ENCODE measurements at regions of chr6 and their contacts with region 1.

Region 1: DNA sequence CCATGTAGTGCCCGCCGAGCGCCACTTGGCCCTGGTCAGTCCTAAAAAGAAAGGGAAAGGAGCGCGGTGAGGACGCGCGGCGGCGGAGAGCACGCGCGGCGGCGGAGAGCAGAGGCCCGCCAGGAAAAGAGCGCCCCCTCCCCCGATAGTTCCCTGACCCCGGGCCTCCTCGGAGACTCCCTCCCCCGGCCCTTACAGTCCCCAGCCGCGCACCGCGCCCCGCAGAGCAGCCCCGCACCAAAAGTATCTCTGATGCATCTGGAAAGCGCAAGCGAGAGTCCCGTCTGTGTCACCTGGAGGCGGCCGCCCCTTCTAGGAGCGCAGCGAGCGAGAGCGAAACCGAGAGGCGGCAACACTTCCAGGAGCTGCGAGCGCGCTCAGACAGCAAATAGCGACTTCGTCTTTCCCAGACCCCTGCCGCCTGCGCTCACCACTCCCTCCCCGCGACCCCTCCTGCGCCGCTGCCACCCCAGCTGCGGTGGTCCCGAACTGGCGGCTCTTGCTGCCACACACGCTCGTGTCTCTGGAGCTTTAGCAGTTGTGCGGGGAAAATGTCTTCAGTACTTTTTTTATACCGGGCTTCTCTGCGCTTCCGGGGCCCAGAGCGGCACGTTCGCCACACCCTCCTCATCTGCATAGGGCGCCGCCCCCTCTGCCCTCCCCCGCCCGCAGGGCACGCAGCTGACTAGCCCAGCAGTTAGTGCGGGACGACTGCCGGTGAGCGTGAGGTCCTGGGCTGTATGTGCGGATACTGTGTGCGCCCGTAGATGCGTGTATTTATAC is at the start of gene TENT5A:
- DNase-seq: peak; percentile 90
- ATAC-seq: peak; percentile 81
- H3K4me3 Mint-ChIP-seq: peak within 1 kb of the TSS; percentile 77
- H3K27ac Mint-ChIP-seq: peak within 1 kb of the TSS; percentile 71
- H3K4me1 Mint-ChIP-seq: peaks cover 21% of the 10 kb centered on the region
- H3K27me3 Mint-ChIP-seq: peaks cover 14% of the 10 kb centered on the region
- total RNA-seq, gene TENT5A: 0.43 to 0.51 TPM

Region 2: DNA sequence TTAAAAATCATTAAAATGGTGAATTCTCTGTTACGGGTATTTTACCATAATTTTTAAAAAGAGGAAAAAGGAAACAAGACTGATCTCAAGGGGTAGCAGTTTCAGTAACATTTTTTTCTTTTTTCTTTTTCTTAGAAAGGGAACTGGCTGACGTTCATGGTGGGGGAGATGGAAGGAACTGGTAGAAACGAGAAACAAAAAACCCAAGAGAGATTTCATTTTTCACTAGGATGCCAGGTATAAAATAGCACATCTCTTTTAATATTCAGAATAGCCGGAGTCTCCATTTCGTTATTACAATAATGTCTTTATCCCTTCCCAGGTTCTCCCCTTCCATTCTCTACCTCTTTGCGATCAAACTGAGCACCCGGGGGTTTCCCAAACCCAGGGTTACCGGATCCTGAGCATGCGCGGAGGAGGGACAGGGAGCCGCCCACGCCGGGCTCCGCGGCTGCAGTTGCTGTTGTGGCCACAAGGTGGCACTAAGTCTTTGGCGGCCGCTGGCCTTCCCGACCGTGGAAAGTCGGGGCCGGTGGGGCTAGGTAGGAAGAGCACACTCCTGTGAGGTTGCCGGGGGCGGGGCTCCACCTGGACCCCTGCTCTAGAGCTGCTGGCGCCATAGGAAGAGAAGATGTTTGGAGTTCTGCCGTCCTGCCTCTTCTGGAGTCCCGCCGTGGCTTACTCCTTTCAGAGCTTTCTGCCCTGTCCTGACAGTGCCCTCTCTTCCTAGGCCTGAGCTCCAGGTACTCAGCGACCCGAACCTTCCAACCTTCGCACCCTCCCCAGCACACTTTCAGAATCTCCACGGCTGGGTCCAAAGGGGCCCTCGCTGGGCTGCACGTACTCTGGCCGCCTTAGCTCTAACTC is 1974.4 kb before region 1 on chr6:
- CTCF ChIA-PET with region 1: no interaction called
- POLR2A ChIA-PET with region 1: no interaction called
- intact Hi-C with region 1: loop called (anchors 5 kb)
- DNase-seq: peak; percentile 93
- ATAC-seq: peak; percentile 88
- H3K4me3 Mint-ChIP-seq: peak overlapping the region; percentile 63
- H3K27ac Mint-ChIP-seq: peak overlapping the region; percentile 62
- H3K4me1 Mint-ChIP-seq: peaks cover 7% of the 10 kb centered on the region
- H3K27me3 Mint-ChIP-seq: peaks cover 4% of the 10 kb centered on the region

Region 3: GRCh38 chr6:80106418-80107235 is 1645.7 kb before region 1 on chr6 and contains the start of gene BCKDHB:
- CTCF ChIA-PET with region 1: interaction called, 3 read pairs
- POLR2A ChIA-PET with region 1: no interaction called
- intact Hi-C with region 1: loop called (anchors 1 to 2 kb)
- DNase-seq: peak; percentile 98
- ATAC-seq: peak; percentile 98
- H3K4me3 Mint-ChIP-seq: peak within 1 kb of the TSS; percentile 90
- H3K27ac Mint-ChIP-seq: peak within 1 kb of the TSS; percentile 88
- H3K4me1 Mint-ChIP-seq: peaks cover 12% of the 10 kb centered on the region
- H3K27me3 Mint-ChIP-seq: peaks cover 6% of the 10 kb centered on the region
- total RNA-seq, gene BCKDHB: 13.1 to 21.4 TPM

Region 4: DNA sequence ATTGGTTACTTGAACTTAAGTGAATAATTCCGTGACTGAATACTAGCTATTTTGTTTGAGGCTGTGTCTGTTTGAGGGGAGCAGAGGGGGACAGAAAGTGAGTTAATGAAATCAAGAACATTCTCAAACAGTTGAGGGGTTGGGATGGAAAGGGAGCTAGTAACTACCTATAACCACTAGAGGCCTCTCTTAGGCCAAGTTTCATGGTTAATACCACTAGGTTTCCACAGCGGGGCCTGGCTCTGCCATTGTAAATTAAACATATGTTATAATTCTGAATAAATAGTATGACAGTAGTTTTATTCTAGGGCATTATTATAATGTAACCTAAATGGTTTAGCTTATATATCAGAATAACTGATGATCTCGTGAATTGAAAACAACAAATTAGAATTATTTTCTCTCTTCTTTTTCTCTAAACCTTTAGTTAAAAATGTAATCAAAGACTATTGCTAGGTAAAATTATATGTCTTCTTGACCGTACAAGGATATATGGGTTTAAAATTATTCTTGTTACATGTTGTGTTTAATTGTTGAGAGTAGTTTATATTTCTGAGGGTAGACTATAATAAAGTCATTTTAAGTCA is 1537.8 kb before region 1 on chr6:
- CTCF ChIA-PET with region 1: interaction called, 4 read pairs
- POLR2A ChIA-PET with region 1: no interaction called
- intact Hi-C with region 1: loop called in 1 of 2 experiments (anchors 2 kb)
- DNase-seq: peak; percentile 22
- ATAC-seq: peak; percentile 76
- H3K4me3 Mint-ChIP-seq: no peak overlapping the region
- H3K27ac Mint-ChIP-seq: no peak overlapping the region
- H3K4me1 Mint-ChIP-seq: peaks cover 5% of the 10 kb centered on the region
- H3K27me3 Mint-ChIP-seq: no peaks in the 10 kb centered on the region

Region 5: DNA sequence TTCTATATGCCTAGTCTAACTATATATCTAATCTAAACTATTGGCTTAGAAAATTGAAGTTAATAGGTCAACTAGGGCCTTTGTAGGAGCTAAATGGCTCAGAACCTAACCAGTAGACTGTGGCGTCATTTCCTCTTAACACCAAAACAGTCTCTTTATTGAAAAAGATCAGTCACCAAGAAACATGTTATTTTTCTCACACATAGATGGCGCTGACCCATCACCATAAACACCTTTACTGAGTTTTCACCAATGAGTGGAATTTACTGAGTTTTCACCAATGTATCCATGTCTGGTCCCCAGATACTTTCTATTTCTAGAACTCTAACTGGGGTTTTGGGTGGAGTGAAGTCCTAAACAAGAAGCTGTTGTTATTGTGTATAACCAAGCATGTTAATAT is 1009.8 kb before region 1 on chr6:
- CTCF ChIA-PET with region 1: no interaction called
- POLR2A ChIA-PET with region 1: no interaction called
- intact Hi-C with region 1: loop called in 1 of 2 experiments (anchors 5 kb)
- DNase-seq: peak; percentile 4
- ATAC-seq: no peak
- H3K4me3 Mint-ChIP-seq: no peak overlapping the region
- H3K27ac Mint-ChIP-seq: no peak overlapping the region
- H3K4me1 Mint-ChIP-seq: no peaks in the 10 kb centered on the region
- H3K27me3 Mint-ChIP-seq: no peaks in the 10 kb centered on the region

Region 6: DNA sequence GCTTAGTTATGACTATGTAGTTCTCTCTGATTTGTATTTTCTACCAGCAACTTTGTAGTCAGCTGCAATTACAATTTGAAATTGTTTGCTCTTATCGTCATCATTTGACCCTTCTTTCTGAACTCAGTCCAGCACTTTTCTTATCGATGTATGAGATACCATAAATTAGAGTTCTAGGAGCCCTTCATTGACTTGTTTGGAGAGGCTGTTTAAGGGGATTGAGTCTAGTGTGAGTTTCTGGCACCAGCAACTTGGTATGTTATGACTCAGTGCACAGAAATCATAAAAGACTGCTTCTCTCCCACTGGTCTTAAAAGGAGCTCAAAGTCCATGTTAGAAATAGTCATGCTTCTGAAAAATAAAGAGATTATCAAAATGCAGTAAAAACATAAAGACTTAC is 190.2 kb before region 1 on chr6:
- CTCF ChIA-PET with region 1: no interaction called
- POLR2A ChIA-PET with region 1: no interaction called
- intact Hi-C with region 1: no loop called
- DNase-seq: no peak
- ATAC-seq: no peak
- H3K4me3 Mint-ChIP-seq: no peak overlapping the region
- H3K27ac Mint-ChIP-seq: no peak overlapping the region
- H3K4me1 Mint-ChIP-seq: no peaks in the 10 kb centered on the region
- H3K27me3 Mint-ChIP-seq: no peaks in the 10 kb centered on the region

Region 7: DNA sequence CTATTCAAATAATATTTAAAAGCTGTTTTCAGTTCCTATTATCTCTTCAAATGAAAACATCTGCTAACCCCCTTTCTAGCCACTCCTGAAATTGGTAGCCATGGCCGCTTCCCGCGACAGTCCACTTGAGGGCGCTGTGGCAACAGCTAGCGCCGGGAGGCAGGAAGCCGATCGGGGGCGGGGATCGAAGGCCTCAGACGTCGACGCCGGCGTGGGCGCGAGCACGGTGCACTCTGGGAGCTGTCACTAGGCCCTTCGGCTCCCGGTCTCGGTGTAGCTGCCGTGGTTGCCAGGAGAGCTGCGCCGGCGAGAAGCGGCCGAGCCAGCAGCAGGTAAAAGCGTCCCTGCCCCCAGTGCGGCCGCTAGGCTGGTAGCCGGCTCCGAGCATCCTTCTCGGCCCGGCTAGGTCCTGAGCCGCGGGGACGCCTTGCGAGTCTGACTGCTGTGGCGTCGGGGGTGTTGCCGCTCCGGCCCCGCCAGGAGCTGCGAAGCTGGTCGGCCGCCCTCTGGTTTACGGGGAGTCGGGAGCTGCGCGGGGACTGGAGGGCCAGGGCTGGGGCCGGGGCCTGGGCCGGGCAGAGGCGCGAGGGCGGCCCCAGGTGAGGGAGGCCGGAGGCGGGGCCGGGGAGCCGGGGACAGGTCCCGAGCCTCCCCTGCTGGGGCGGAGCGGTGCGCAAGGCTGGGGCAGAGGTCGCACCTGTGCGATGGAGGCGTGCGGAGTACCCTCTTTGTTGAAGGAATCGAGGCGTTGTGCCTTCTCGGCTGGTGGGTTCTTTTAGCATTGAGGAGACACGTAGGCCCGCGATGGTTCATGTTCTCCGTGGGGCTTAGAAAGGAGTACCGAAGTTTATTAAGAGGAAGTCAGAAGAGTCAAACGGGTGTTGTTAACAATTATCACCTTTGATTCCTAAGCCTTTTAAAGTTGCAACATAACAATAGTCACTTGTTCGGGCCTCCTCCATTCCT is 1315.4 kb after region 1 on chr6 and contains the start of gene DOP1A:
- CTCF ChIA-PET with region 1: no interaction called
- POLR2A ChIA-PET with region 1: no interaction called
- intact Hi-C with region 1: loop called in 1 of 2 experiments (anchors 5 kb)
- DNase-seq: peak; percentile 99
- ATAC-seq: peak; percentile 87
- H3K4me3 Mint-ChIP-seq: peak within 1 kb of the TSS; percentile 88
- H3K27ac Mint-ChIP-seq: peak within 1 kb of the TSS; percentile 84
- H3K4me1 Mint-ChIP-seq: peaks cover 47% of the 10 kb centered on the region
- H3K27me3 Mint-ChIP-seq: no peaks in the 10 kb centered on the region
- total RNA-seq, gene DOP1A: 5.4 to 7.3 TPM